ENCODE measurements at regions of chr3 and their contacts with region 1.

Region 1: DNA sequence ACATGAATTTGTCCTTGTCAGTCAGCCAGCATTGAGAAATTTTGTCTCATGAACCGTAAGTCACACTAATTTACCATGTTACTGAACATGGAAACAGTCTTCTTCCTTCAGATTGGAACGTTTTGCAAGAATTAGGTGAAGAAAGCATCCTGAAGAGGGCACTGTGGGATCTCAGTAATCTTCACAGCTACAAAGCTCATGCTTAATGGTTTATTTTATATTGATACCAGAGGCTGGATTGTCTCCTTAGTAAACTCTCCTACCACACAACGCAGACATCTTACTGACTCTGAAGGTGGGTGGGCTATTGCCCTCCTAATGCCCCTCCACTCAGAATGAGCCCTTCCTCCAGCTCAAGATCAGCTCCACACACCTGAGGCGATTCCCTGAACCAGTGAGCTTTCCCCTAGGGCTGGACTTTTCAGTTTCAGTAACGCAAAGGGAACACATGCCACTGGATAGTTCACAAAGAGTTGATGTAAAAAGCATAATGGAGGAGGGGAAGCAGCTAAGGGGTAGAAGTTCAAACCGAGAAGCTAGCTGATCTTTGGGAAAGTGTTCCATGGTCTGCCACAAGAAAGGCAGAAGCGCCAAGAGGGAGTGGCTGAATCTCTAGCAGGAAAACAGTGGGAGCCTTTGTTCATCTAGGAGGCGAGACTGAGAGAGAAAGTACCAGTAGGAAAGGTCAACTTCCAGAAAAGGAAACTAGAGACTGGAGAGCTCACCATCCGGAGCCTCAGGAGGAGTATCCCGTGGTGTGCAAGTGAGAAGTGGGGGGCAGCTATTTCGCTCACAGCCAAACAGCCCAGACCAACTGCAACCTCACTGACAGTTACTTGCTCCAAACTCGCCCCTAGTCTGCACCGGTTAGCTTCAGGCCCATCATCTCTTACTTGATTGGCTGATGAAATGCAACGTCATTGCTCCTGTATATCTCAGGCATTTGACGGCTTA is at the start of gene SLC9C1:
- DNase-seq: peak; percentile 29
- ATAC-seq: peak; percentile 89 to 94
- total RNA-seq, gene SLC9C1: 0.26 to 1.4 TPM

Region 2: DNA sequence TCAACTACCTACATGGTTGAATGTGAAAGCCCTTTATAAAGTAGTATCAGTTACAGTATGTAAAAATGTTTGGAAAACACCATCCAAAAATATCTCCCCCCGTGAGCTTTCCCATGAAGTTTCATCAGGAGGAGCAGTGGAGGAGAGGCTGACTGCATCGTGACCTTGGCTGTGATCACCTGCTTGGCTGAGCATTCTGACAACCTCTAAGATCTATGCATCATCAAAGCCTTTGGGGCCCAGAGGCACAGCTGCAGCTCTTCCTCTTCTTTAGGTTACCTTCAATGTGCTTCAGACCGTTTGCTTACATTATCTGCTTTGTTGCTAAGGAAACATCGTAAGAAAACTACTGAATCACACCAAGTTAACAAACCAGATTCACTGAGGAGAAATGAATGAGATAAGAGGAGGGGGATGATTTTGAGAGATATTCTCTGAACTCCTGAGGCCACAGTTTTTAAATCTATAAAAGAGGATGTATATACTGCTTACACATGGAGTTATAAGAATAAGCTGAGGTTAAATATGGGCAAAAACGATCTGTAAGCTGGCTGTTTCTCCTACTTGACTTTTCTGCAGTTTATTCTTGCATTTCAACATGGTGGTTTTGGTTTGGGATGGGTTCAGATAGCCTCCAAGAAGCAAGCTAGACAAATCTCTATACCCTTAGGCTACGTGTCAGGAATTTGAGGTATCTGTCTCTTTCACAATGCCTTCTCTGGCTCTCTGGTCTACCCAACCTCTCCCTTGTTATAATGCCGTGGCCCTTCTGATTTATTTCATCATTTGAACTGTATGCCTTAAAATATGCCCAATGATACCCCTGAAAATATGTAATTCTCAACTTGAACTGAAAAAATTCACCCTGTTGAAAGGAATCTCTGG is 164.6 kb before region 1 on chr3:
- intact Hi-C with region 1: loop called in 1 of 2 experiments (anchors 10 kb)
- DNase-seq: no peak
- ATAC-seq: peak in 1 of 2 donors; percentile 48

Region 3: DNA sequence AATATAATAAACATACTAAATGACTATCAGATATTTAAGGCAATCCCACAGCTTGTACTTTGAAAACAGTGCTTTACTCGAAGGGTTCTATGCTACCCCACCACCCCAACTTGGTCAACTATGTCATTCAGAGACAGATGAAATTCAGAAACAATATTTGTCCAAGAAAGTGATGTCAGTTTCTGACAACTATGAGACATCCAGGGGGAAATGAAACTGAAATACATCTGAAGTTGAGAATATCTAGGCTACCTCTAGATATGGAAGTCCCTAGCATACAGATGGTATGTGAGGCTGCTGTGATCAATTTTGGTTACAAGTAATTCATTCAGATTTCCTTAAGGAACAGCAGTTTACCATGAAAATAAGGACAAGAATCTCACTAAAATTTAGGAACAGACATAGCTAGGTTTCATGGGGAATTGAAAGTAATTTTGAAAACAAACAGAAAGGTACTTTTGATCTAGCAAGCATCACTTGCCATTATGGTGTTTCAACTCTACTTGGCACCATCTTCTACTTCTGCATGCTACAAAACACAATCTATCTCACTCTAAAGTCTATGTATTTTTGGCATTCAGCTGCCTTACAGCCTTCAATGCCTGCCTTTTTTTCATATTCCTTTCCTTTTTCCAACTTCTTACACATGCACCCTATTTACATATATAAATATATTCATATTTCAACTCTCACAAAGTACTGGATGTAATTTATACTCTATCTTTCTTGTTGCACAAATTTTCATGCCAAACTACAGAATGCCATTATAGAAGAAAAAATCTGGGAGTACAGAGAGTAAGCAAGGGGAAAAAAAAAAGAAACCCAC is 246.4 kb after region 1 on chr3:
- intact Hi-C with region 1: no loop called
- DNase-seq: no peak
- ATAC-seq: no peak

Measured in left cardiac atrium (tissue), 4 donors.